ENCODE measurements at regions of chr14 and their contacts with region 1.

Region 1: DNA sequence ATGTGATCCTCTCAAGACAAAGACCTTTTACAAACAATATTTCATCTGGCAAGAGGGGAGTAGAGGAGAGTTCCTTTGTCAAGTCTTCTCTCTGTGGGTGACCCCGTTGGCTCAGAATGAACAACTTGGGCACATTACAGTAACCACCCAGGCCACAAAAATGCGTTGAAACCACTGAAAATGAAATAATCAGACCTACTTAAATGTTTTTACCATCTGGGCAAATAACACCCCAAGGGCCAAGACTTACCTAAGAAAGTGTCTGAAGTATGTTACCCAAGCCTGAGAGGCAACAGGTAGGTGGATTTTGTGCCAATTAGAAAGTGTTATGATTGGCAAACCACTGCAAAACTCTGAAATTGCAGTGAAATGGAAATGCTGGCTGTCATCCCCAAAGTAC is 1.3 kb downstream of the TC2N start:
- DNase-seq: peak; percentile 66
- ATAC-seq: peak; percentile 20
- H3K4me3 Mint-ChIP-seq: peak overlapping the region; percentile 84
- H3K27ac Mint-ChIP-seq: peak overlapping the region; percentile 97
- H3K4me1 Mint-ChIP-seq: peaks cover 91% of the 10 kb centered on the region
- H3K27me3 Mint-ChIP-seq: no peaks in the 10 kb centered on the region

Region 2: GRCh38 chr14:92540472-92541053 is 674.5 kb after region 1 on chr14:
- CTCF ChIA-PET with region 1: no interaction called
- POLR2A ChIA-PET with region 1: no interaction called
- intact Hi-C with region 1: loop called in 1 of 2 experiments (anchors 10 kb)
- DNase-seq: no peak
- ATAC-seq: peak; percentile 31
- H3K4me3 Mint-ChIP-seq: no peak overlapping the region
- H3K27ac Mint-ChIP-seq: peak overlapping the region; percentile 4
- H3K4me1 Mint-ChIP-seq: peaks cover 45% of the 10 kb centered on the region
- H3K27me3 Mint-ChIP-seq: no peaks in the 10 kb centered on the region